ENCODE measurements at regions of chr13 and their contacts with region 1.

Region 1: GRCh38 chr13:51452361-51453206 is at the start of gene INTS6:
- DNase-seq: peak; percentile 37
- H3K4me3 ChIP-seq: peak within 1 kb of the TSS; percentile 74 to 99 (median 90)
- H3K27ac ChIP-seq: peak within 1 kb of the TSS; percentile 99 to 100 (median 100)
- H3K4me1 ChIP-seq: peaks cover 14 to 28% (median 22%) of the 10 kb centered on the region in 4 donors
- H3K27me3 ChIP-seq: no peaks in the 10 kb centered on the region
- CTCF ChIP-seq: no peak
- EP300 ChIP-seq: no peak
- POLR2A ChIP-seq: peak; percentile 100
- total RNA-seq, gene INTS6: 15.3 to 37.0 (median 25.2) TPM

Region 2: GRCh38 chr13:50991579-50992521 is 460.7 kb before region 1 on chr13:
- in situ Hi-C with region 1: no loop called
- intact Hi-C with region 1: no loop called
- DNase-seq: no peak
- H3K4me3 ChIP-seq: no peak overlapping the region
- H3K27ac ChIP-seq: peak overlapping the region; percentile 23 to 48 (median 36)
- H3K4me1 ChIP-seq: peaks cover 0 to 37% (median 5%) of the 10 kb centered on the region in 4 donors
- H3K27me3 ChIP-seq: no peaks in the 10 kb centered on the region
- CTCF ChIP-seq: no peak
- EP300 ChIP-seq: no peak
- POLR2A ChIP-seq: no peak

Region 3: DNA sequence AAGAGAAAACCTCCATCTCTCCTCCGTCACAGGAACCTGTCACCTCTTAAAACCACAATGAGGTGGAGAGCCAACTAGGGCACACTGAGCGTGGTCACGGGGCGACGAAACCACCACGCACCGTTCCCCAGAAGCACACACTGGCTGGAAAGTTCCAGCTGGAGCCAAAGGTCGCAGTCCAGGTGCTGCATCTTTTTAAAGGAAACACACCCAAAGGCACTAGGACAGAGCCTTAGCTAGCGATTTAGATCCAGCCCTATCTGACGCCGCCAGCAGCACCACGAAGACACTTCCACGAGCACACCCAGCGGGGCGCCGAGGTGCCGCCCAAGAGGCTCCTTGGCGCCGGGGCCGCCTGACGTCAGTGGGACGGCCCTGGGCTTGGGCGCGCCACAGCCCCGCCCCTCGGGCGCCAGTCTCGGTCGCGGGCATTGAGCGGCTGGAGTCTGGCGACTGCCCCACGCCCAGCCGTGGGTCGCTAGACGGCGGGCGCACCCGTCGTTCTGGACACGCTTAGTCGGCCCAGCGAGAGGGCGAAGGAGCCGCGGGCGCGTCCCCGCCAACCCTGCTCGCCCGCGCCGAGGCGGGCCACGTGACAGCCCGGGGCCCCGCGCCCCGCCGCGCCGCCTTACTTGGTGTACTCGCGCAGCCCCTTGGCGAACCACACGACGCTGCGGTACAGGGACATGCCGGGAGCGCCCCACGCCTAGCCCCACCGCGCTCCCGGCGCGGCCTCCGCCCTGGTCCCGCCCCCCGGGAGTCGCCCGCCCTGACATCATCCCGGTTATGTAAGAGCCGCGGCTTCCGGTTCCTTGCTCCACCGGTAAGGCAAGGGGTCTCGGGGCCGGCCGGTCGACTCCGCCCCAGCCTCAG is 351.1 kb after region 1 on chr13 and contains the start of gene DHRS12:
- in situ Hi-C with region 1: loop called (anchors 10 to 25 kb)
- intact Hi-C with region 1: loop called (anchors 5 kb)
- DNase-seq: peak; percentile 94
- H3K4me3 ChIP-seq: peak within 1 kb of the TSS; percentile 72 to 94 (median 80)
- H3K27ac ChIP-seq: peak within 1 kb of the TSS; percentile 99 to 100 (median 100)
- H3K4me1 ChIP-seq: peaks cover 20 to 44% (median 30%) of the 10 kb centered on the region in 4 donors
- H3K27me3 ChIP-seq: no peaks in the 10 kb centered on the region
- CTCF ChIP-seq: no peak
- EP300 ChIP-seq: peak; percentile 53
- POLR2A ChIP-seq: peak; percentile 88
- total RNA-seq, gene DHRS12: 5.2 to 17.8 (median 13.5) TPM

Measured in transverse colon (tissue), 4 donors.